Heart right ventricle (tissue), 16 donors: ENCODE measurements at regions of chr16 and their contacts with region 1.

Region 1: GRCh38 chr16:89700100-89700648 is 1.3 kb downstream of the SPATA2L start:
- DNase-seq: peak; percentile 98 to 99
- ATAC-seq: peak; percentile 73 to 92 (median 82)
- H3K4me3 ChIP-seq: peak overlapping the region; percentile 59 to 78 (median 74)
- H3K27ac ChIP-seq: peak overlapping the region; percentile 1 to 85 (median 75)
- H3K4me1 ChIP-seq: peaks cover 10 to 34% (median 26%) of the 10 kb centered on the region in 9 donors
- H3K27me3 ChIP-seq: no peaks in the 10 kb centered on the region
- CTCF ChIP-seq: peak; percentile 42 to 81 (median 69)

Region 2: GRCh38 chr16:89720813-89721545 is 20.8 kb after region 1 on chr16 and contains the starts of genes VPS9D1 and ZNF276:
- intact Hi-C with region 1: loop called in 4 of 10 experiments (anchors 1 to 2 kb)
- DNase-seq: peak; percentile 88
- ATAC-seq: peak; percentile 68 to 89 (median 81)
- H3K4me3 ChIP-seq: peak within 1 kb of the TSS; percentile 62 to 99 (median 90)
- H3K27ac ChIP-seq: peak within 1 kb of the TSS; percentile 89 to 100 (median 98)
- H3K4me1 ChIP-seq: peaks cover 26 to 61% (median 39%) of the 10 kb centered on the region in 9 donors
- H3K27me3 ChIP-seq: no peaks in the 10 kb centered on the region
- CTCF ChIP-seq: no peak
- total RNA-seq, gene VPS9D1: 9.3 to 15.6 (median 11.8) TPM
- total RNA-seq, gene ZNF276: 8.2 to 16.0 (median 12.8) TPM

Region 3: DNA sequence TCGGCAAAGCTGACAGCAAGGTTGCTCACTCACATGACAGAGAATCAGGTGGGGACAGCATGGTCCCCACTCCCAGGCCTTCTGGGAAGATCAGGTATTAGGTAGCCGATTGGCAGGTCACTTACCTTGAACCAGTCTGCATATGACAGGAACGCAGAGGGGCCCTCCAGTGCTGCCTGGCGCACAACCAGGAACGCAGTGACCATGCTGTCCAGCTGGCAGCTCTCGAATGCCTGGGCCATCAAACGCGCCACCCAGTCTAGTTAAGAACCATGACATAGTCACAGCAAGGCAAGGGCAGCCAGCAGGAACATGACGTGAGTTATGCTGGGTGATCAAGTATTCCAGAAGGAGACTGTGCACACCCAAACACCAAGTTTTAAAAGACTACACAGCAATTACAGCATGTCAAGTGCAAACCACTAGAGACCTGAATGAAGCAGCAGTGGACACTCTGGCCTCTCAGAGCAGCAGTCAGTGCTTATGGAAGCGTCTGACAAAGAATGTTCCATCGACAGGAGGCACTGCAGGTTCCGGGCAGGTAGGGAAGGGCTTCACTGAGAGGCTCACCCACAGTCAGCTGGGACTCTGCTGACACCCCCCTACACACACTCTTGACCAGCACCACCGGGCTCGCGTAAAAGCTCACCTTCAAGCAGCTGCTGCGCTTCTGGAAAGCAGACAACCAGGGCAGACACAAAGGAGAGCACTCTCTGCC is 91.3 kb after region 1 on chr16:
- intact Hi-C with region 1: loop called in 9 of 10 experiments (anchors 5 to 10 kb)
- DNase-seq: peak in 1 of 2 donors; percentile 26
- ATAC-seq: peak in 6 of 8 donors; percentile 18 to 75 (median 44)
- H3K4me3 ChIP-seq: no peak overlapping the region
- H3K27ac ChIP-seq: no peak overlapping the region
- H3K4me1 ChIP-seq: peaks cover 0 to 3% (median 0%) of the 10 kb centered on the region in 9 donors
- H3K27me3 ChIP-seq: no peaks in the 10 kb centered on the region
- CTCF ChIP-seq: no peak

Region 4: GRCh38 chr16:89853306-89853993 is 153.3 kb after region 1 on chr16:
- intact Hi-C with region 1: loop called in 1 of 10 experiments (anchors 10 kb)
- DNase-seq: no peak
- ATAC-seq: no peak
- H3K4me3 ChIP-seq: no peak overlapping the region
- H3K27ac ChIP-seq: no peak overlapping the region
- H3K4me1 ChIP-seq: no peaks in the 10 kb centered on the region
- H3K27me3 ChIP-seq: no peaks in the 10 kb centered on the region
- CTCF ChIP-seq: no peak

Region 5: GRCh38 chr16:89873972-89874689 is 174.0 kb after region 1 on chr16:
- intact Hi-C with region 1: loop called in 1 of 10 experiments (anchors 5 kb)
- DNase-seq: peak; percentile 95 to 97
- ATAC-seq: peak; percentile 92 to 95 (median 94)
- H3K4me3 ChIP-seq: peak overlapping the region; percentile 61 to 90 (median 83)
- H3K27ac ChIP-seq: peak overlapping the region; percentile 98 to 100 (median 99)
- H3K4me1 ChIP-seq: peaks cover 3 to 29% (median 18%) of the 10 kb centered on the region in 9 donors
- H3K27me3 ChIP-seq: no peaks in the 10 kb centered on the region
- CTCF ChIP-seq: no peak